ENCODE measurements at regions of chr6 and their contacts with region 1.

Region 1: GRCh38 chr6:3848925-3849605 is at the start of gene FAM50B:
- DNase-seq: peak; percentile 79 to 96
- H3K4me3 ChIP-seq: peak within 1 kb of the TSS; percentile 46 to 64
- H3K27ac ChIP-seq: peak within 1 kb of the TSS; percentile 70 to 74
- H3K4me1 ChIP-seq: peaks cover 0 to 36% of the 10 kb centered on the region in 2 donors
- H3K27me3 ChIP-seq: no peaks in the 10 kb centered on the region
- CTCF ChIP-seq: peak; percentile 91 to 99 (median 98)
- total RNA-seq, gene FAM50B: 8.1 TPM

Region 2: GRCh38 chr6:3929281-3929798 is 80.3 kb after region 1 on chr6:
- intact Hi-C with region 1: loop called (anchors 1 kb)
- DNase-seq: no peak
- H3K4me3 ChIP-seq: no peak overlapping the region
- H3K27ac ChIP-seq: peak overlapping the region; percentile 39 to 52
- H3K4me1 ChIP-seq: peaks cover 0 to 9% of the 10 kb centered on the region in 2 donors
- H3K27me3 ChIP-seq: no peaks in the 10 kb centered on the region
- CTCF ChIP-seq: no peak

Region 3: DNA sequence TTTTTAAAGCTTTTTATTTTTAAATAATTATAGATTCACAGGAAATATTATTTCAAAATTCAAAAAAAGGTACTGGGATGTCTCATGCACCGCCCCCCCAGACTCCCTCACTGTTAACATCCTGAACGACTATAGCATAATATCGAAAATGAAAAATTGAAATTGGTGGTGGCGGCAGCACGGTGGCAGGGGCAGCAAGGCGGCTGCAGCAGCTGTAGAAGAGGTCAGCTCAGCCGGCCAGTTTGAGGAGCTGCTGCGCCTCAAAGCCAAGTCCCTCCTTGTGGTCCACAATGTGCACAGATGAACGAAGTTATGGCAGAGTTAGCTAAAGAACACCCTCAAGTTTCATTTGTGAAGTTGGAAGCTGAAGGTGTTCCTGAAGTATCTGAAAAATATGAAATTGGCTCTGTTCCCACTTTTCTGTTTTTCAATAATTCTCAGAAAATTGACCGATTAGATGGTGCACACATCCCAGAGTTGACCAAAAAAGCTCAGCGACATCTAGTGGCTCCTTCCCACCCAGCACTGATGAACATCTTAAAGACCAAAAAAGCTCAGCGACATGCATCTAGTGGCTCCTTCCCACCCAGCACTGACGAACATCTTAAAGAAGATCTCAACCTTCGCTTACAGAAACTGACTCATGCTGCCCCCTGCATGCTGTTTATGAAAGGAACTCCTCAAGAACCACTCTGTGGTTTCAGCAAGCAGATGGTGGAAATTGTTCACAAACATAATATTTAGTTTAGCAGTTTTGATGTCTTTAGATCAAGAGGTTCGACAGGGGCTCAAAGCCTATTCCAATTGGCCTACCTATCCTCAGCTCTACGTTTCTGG is 129.0 kb after region 1 on chr6:
- intact Hi-C with region 1: loop called (anchors 2 kb)
- DNase-seq: peak in 1 of 2 donors; percentile 68
- H3K4me3 ChIP-seq: no peak overlapping the region
- H3K27ac ChIP-seq: no peak overlapping the region
- H3K4me1 ChIP-seq: no peaks in the 10 kb centered on the region
- H3K27me3 ChIP-seq: no peaks in the 10 kb centered on the region
- CTCF ChIP-seq: peak; percentile 48 to 61 (median 58)

Measured in ascending aorta (tissue), 2 donors.